Naive thymus-derived CD4-positive, alpha-beta T cell (primary cell): ENCODE measurements at regions of chr14 and their contacts with region 1.

Region 1: GRCh38 chr14:24271134-24271833 is at the start of gene RABGGTA:
- DNase-seq: peak; percentile 87 to 97 (median 96)
- ATAC-seq: peak; percentile 91
- H3K4me3 ChIP-seq: peak within 1 kb of the TSS; percentile 80
- H3K4me3 Mint-ChIP-seq: peak within 1 kb of the TSS; percentile 79 to 95 (median 92)
- H3K27ac ChIP-seq: peak within 1 kb of the TSS; percentile 98
- H3K27ac Mint-ChIP-seq: peak within 1 kb of the TSS; percentile 93 to 100 (median 98)
- H3K4me1 ChIP-seq: peaks cover 17 to 23% of the 10 kb centered on the region in 2 donors
- H3K4me1 Mint-ChIP-seq: peaks cover 30 to 52% (median 46%) of the 10 kb centered on the region in 7 donors
- H3K27me3 ChIP-seq: no peaks in the 10 kb centered on the region
- H3K27me3 Mint-ChIP-seq: no peaks in the 10 kb centered on the region
- total RNA-seq, gene RABGGTA: 49.7 to 76.5 (median 55.5) TPM

Region 2: GRCh38 chr14:23567192-23568020 is 703.9 kb before region 1 on chr14 and contains the start of gene AP1G2:
- CTCF ChIA-PET with region 1: no interaction called
- POLR2A ChIA-PET with region 1: no interaction called
- intact Hi-C with region 1: loop called in 1 of 2 experiments (anchors 5 kb)
- DNase-seq: peak; percentile 67 to 87 (median 83)
- ATAC-seq: peak; percentile 93
- H3K4me3 ChIP-seq: peak within 1 kb of the TSS; percentile 98
- H3K4me3 Mint-ChIP-seq: peak within 1 kb of the TSS; percentile 98 to 100 (median 99)
- H3K27ac ChIP-seq: peak within 1 kb of the TSS; percentile 81
- H3K27ac Mint-ChIP-seq: peak within 1 kb of the TSS; percentile 96 to 99 (median 98)
- H3K4me1 ChIP-seq: peaks cover 14 to 16% of the 10 kb centered on the region in 2 donors
- H3K4me1 Mint-ChIP-seq: peaks cover 19 to 48% (median 43%) of the 10 kb centered on the region in 7 donors
- H3K27me3 ChIP-seq: no peaks in the 10 kb centered on the region
- H3K27me3 Mint-ChIP-seq: peaks cover 0 to 11% (median 0%) of the 10 kb centered on the region in 5 donors
- total RNA-seq, gene AP1G2: 266 to 548 (median 293) TPM

Region 3: GRCh38 chr14:24141097-24141880 is 130.0 kb before region 1 on chr14 and contains the start of gene EMC9:
- CTCF ChIA-PET with region 1: no interaction called
- POLR2A ChIA-PET with region 1: interaction called, 5 read pairs
- intact Hi-C with region 1: loop called in 1 of 2 experiments (anchors 1 kb)
- DNase-seq: peak; percentile 90 to 100 (median 99)
- ATAC-seq: peak; percentile 94
- H3K4me3 ChIP-seq: peak within 1 kb of the TSS; percentile 87
- H3K4me3 Mint-ChIP-seq: peak within 1 kb of the TSS; percentile 85 to 100 (median 94)
- H3K27ac ChIP-seq: peak within 1 kb of the TSS; percentile 83
- H3K27ac Mint-ChIP-seq: peak within 1 kb of the TSS; percentile 83 to 96 (median 93)
- H3K4me1 ChIP-seq: peaks cover 33 to 43% of the 10 kb centered on the region in 2 donors
- H3K4me1 Mint-ChIP-seq: peaks cover 47 to 87% (median 77%) of the 10 kb centered on the region in 7 donors
- H3K27me3 ChIP-seq: no peaks in the 10 kb centered on the region
- H3K27me3 Mint-ChIP-seq: no peaks in the 10 kb centered on the region
- total RNA-seq, gene EMC9: 9.0 to 25.5 (median 22.3) TPM

Region 4: DNA sequence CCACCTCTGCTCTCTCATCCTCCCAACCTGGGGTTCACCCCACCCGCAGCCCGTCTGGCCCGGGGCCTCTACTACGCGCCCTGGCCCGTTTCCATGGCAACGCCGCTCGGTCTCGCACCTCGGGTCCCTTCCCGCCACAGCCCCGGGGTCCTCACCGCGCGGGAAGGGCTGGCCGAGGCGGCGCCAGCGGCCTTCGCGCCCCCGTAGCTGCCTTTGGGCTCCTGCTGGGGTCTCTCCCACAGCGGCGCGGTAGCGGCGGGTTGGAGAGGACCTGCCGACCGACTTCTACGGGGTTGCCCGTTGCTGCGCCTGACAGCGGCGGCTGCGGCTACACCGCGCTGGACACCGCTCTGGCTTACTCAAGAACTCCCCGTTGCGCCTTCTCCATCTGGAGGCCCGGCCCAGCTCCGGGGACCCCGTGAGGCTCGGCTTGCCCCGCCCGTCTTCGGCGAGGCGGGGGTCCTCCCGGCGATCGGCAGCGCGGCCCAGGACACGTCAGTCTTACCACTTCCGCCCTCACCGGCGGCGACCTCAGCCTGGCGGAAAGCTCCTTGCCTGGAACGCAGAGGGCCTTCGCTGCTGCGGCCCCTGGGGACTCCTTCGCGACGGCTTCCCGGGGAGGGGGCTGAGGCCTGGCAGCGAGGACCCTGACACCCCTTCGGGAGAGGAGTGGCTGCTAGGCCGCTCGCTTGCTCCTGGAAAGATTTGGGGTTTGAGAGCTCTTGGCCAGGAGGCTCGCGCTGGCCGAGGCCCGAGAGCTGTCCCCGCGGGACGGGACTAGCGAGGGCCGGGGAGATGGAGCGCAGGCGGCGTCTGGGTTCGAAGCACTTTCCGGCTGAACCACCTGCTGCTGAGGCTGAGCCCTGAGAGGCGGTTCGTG is 75.9 kb before region 1 on chr14 and contains the start of gene TM9SF1:
- CTCF ChIA-PET with region 1: interaction called, 3 read pairs
- POLR2A ChIA-PET with region 1: interaction called, 8 read pairs
- intact Hi-C with region 1: loop called (anchors 1 kb)
- DNase-seq: peak; percentile 86 to 92 (median 90)
- ATAC-seq: peak; percentile 90
- H3K4me3 ChIP-seq: peak within 1 kb of the TSS; percentile 74
- H3K4me3 Mint-ChIP-seq: peak within 1 kb of the TSS; percentile 88 to 97 (median 93)
- H3K27ac ChIP-seq: peak within 1 kb of the TSS; percentile 99
- H3K27ac Mint-ChIP-seq: peak within 1 kb of the TSS; percentile 88 to 98 (median 98)
- H3K4me1 ChIP-seq: peaks cover 14 to 16% of the 10 kb centered on the region in 2 donors
- H3K4me1 Mint-ChIP-seq: peaks cover 38 to 69% (median 59%) of the 10 kb centered on the region in 7 donors
- H3K27me3 ChIP-seq: no peaks in the 10 kb centered on the region
- H3K27me3 Mint-ChIP-seq: no peaks in the 10 kb centered on the region
- total RNA-seq, gene TM9SF1: 16.2 to 40.5 (median 19.2) TPM

Region 5: GRCh38 chr14:24310646-24311604 is 39.6 kb after region 1 on chr14 and contains the start of gene LTB4R:
- CTCF ChIA-PET with region 1: interaction called, 4 read pairs
- POLR2A ChIA-PET with region 1: interaction called, 37 read pairs
- intact Hi-C with region 1: loop called (anchors 1 to 5 kb)
- DNase-seq: peak; percentile 61 to 79 (median 73)
- ATAC-seq: peak; percentile 85
- H3K4me3 ChIP-seq: peak within 1 kb of the TSS; percentile 50
- H3K4me3 Mint-ChIP-seq: peak within 1 kb of the TSS; percentile 77 to 91 (median 85)
- H3K27ac ChIP-seq: peak within 1 kb of the TSS; percentile 76
- H3K27ac Mint-ChIP-seq: peak within 1 kb of the TSS; percentile 86 to 95 (median 89)
- H3K4me1 ChIP-seq: peaks cover 60 to 65% of the 10 kb centered on the region in 2 donors
- H3K4me1 Mint-ChIP-seq: peaks cover 58 to 79% (median 72%) of the 10 kb centered on the region in 7 donors
- H3K27me3 ChIP-seq: no peaks in the 10 kb centered on the region
- H3K27me3 Mint-ChIP-seq: no peaks in the 10 kb centered on the region
- total RNA-seq, gene LTB4R: 14.1 to 28.8 (median 26.3) TPM

Region 6: GRCh38 chr14:24431569-24432258 is 160.4 kb after region 1 on chr14:
- CTCF ChIA-PET with region 1: interaction called, 5 read pairs
- POLR2A ChIA-PET with region 1: interaction called, 11 read pairs
- intact Hi-C with region 1: loop called in 1 of 2 experiments (anchors 1 kb)
- DNase-seq: peak; percentile 76 to 91 (median 86)
- ATAC-seq: peak; percentile 77
- H3K4me3 ChIP-seq: peak overlapping the region; percentile 96
- H3K4me3 Mint-ChIP-seq: peak overlapping the region; percentile 82 to 96 (median 91)
- H3K27ac ChIP-seq: peak overlapping the region; percentile 99
- H3K27ac Mint-ChIP-seq: peak overlapping the region; percentile 51 to 97 (median 96)
- H3K4me1 ChIP-seq: peaks cover 24 to 41% of the 10 kb centered on the region in 2 donors
- H3K4me1 Mint-ChIP-seq: peaks cover 19 to 59% (median 53%) of the 10 kb centered on the region in 7 donors
- H3K27me3 ChIP-seq: no peaks in the 10 kb centered on the region
- H3K27me3 Mint-ChIP-seq: no peaks in the 10 kb centered on the region